ENCODE measurements at regions of chr20 and their contacts with region 1.

Region 1: DNA sequence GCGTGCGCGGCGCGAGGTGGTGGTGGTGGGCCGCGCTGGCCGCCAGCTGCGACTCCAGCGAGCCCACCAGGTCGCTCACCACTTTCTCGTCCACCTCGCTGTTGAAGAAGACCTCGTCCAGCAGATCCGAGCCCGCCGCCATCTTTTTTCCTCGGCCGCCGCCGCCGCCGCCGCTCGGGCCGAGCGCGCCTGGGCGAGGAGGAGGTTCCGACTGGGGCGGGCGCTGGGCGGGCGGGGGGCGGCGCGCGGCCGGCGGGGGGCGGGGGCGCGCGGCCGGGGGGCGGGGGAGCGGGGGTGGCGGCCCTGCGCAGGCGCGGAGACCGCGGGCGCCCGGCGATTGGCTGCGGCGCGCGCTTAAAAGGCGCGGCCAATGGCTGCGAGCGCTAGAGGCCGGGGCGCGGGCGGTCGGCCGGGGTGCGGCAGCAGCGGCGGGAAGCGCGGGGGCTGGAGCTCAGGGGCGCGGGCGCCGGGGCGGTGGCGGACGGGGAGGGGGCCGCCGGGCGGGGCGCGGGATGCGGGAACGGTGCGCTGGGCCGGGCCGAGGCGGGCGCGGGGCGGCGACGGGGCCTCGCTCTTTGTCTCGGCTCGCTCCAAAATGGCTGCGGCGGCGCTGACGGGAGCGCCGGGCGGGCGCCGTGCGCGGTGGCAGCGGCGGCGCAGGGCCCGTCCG is at the start of gene TAF4:
- DNase-seq: peak; percentile 98

Region 2: GRCh38 chr20:62050166-62051120 is 15.4 kb before region 1 on chr20:
- CTCF ChIA-PET with region 1: no interaction called
- POLR2A ChIA-PET with region 1: no interaction called
- DNase-seq: no peak

Region 3: GRCh38 chr20:62088237-62089127 is 22.7 kb after region 1 on chr20:
- CTCF ChIA-PET with region 1: no interaction called
- POLR2A ChIA-PET with region 1: interaction called, 16 read pairs
- DNase-seq: no peak

Region 4: DNA sequence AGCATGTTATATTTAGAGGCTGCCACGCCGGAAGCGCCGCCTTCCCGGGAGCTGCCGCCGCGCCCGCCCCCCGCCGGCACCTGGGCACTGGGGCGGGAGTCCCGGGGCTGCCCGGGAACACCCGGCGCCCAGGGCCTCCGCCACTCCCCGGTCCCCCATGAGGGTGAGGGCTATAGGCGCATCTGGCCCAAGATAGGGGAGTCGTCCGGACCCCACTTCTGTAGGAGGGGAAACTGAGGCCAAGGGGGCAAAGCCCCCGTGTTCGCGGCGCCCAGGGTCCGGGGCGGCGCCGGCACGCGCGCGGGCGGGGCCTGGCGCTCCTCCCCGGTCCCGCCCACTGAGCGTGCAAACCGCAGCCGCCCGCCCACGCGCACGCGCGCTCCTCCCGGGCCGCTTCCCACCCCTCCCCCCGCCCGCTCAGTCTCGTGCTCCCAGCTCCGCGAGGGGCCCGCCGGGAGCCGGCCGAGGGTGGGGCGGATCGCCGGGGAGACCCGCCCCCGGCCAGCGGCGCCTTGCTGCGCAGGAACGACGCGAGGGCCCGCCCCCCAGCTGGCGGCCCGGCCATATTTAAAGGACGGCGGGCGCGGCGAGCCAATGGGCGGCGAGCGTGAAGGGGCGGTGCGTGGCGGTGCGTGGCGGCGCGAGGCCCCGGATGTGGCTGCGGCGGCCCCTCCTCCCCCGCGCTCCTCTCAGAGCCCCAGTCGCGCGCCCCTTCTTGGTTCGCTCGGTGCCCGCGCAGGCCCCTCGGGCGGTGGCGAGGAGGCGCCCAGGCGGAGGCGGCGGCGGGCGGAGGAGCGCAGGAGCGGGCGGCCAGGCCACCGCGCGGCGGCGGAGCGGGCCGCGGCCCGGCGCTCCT is 56.2 kb after region 1 on chr20 and contains the start of gene LSM14B:
- CTCF ChIA-PET with region 1: interaction called, 3 read pairs
- POLR2A ChIA-PET with region 1: interaction called, 37 read pairs
- DNase-seq: peak; percentile 98